HEK293T (cell line): ENCODE measurements at regions of chr4 and their contacts with region 1.

Region 1: DNA sequence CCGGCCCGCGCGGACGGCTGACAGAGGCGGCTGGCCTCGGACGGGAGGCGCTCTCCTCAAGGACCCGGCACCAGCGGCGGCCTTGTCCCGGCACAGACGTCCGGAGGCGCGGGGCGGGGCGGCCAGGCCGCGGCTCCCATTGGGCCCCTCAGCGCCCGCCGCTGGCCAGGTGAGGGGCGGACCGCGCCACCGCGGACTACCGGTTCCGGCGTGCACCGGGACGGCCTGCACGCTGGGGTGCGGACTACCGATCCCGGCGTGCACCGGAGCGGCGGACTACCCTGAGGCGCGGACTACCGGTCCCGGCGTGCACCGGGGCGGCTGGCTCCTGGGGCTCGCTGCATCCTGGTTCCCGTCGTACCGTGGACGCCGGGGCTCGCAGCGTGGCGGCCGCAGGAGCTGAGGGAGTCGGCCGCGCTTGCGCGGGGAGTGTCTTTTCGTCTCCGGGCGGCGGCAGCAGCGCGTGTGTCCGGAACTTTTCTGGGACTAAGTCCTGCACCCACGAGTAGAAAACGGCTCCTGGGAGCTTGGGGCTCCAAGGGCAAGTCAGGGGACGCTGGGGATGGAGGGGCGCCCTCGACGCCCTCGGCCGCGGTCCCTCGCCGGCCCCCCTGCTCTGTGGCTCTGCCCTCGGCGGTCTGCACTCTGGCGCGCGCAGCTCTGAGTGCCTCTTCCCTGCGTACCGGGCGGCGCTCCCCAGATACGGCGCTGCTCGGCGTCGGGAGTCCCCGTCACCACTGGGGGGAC is at the start of gene LETM1:
- DNase-seq: peak; percentile 92

Region 2: DNA sequence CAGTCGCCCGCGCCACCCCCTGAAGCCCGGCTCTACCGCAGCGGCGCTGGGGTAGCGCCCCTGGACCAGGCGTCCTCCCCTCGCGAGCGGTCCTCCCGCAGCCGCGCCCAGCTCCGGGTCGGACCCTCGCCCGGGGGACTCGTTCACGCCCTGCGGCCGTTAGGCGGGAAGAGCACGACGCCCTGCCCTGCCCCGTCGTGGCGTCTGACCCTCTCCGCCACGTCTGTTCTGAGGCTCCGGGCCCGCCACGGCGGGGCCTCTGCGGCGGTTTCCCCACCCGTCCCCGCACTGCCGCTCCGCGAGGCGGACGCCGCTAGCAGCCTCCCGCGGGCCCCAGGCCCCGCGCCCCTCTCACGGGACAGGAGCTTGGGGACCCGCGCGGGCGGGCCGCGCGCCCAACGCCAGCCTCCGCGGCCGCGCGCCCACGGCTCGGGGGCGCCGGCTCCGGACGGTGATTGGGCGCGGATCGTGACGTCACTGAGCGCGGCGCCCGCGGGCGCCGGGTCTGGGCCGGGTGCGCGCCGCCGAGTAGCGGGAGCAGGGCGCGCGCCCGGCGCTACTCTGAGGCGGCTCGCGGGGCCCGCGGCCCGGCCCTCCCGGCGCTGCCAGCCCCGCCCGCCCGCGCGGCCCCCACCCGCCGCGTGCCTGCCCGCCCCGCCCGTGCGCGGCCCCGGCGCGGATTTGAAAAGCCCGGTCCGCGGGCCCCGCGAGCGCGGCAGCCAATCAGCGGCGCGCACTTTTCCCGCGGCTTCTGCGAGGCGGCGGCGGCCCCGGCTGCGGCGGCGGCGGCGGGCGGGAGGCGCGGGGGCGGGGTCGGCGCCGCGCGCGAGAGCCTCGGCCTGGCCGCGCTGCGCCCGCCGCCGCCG is 14.6 kb after region 1 on chr4 and contains the start of gene NSD2:
- CTCF ChIA-PET with region 1: no interaction called
- POLR2A ChIA-PET with region 1: interaction called, 31 read pairs
- DNase-seq: peak; percentile 94